ENCODE measurements at regions of chr11 and their contacts with region 1.

Region 1: DNA sequence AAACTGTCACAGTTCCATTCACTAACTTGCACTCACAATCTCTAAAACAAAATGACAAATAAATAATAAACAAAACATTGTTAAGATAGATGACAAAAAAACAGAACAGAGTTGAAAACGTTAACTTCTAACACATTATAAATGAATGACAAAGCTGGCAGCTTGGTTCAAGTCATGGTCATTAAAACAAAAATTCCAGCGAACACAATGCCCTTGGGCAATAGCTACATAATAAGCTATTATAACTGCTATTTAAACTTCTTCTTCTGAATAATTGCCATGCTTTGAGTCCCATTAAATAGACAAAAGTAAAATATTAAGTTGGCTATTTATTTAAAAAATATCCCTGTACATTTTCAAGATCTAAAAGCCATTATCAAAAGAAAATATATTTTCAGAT is 54.7 kb downstream of the PICALM start:
- DNase-seq: no peak
- H3K4me3 Mint-ChIP-seq: no peak overlapping the region
- H3K27ac Mint-ChIP-seq: no peak overlapping the region
- H3K4me1 Mint-ChIP-seq: peaks cover 12% of the 10 kb centered on the region
- H3K27me3 Mint-ChIP-seq: no peaks in the 10 kb centered on the region

Region 2: GRCh38 chr11:85965202-85965601 is 49.0 kb before region 1 on chr11:
- CTCF ChIA-PET with region 1: no interaction called
- intact Hi-C with region 1: loop called (anchors 5 kb)
- DNase-seq: no peak
- H3K4me3 Mint-ChIP-seq: no peak overlapping the region
- H3K27ac Mint-ChIP-seq: no peak overlapping the region
- H3K4me1 Mint-ChIP-seq: peaks cover 20% of the 10 kb centered on the region
- H3K27me3 Mint-ChIP-seq: no peaks in the 10 kb centered on the region

Region 3: GRCh38 chr11:86052693-86053641 is 38.7 kb after region 1 on chr11:
- CTCF ChIA-PET with region 1: no interaction called
- intact Hi-C with region 1: no loop called
- DNase-seq: no peak
- H3K4me3 Mint-ChIP-seq: no peak overlapping the region
- H3K27ac Mint-ChIP-seq: peak overlapping the region; percentile 1
- H3K4me1 Mint-ChIP-seq: peaks cover 88% of the 10 kb centered on the region
- H3K27me3 Mint-ChIP-seq: no peaks in the 10 kb centered on the region